CD8-positive, alpha-beta memory T cell (primary cell): ENCODE measurements at regions of chr1 and their contacts with region 1.

Region 1: DNA sequence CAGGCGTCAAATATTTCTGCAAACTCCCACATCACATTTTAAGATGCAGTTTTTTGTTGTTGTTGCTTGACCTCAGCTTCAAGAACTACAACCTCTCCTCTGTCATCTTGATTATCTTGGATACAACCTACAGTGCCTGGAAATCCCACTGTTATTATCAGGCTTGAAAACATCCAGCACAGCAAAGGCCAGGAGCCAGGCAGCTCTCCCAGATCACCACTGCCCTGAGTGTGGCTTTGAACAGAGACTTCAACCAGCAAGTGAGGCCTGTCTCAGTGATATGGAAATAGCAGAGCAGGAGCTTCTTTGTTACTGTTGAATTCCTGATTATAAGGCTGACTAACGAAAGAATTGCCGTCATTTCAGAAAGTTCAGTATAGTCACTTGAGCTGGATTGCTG is 28.5 kb downstream of the CCDC190 start:
- DNase-seq: no peak
- H3K4me3 ChIP-seq: no peak overlapping the region
- H3K4me3 Mint-ChIP-seq: no peak overlapping the region
- H3K27ac ChIP-seq: no peak overlapping the region
- H3K27ac Mint-ChIP-seq: no peak overlapping the region
- H3K4me1 ChIP-seq: no peaks in the 10 kb centered on the region
- H3K4me1 Mint-ChIP-seq: peaks cover 4 to 25% (median 7%) of the 10 kb centered on the region in 3 donors
- H3K27me3 ChIP-seq: no peaks in the 10 kb centered on the region
- H3K27me3 Mint-ChIP-seq: peaks cover 8 to 17% of the 10 kb centered on the region in 2 donors

Region 2: GRCh38 chr1:162868972-162869371 is 36.5 kb after region 1 on chr1:
- CTCF ChIA-PET with region 1: no interaction called
- POLR2A ChIA-PET with region 1: interaction called, 12 read pairs
- DNase-seq: no peak
- H3K4me3 ChIP-seq: no peak overlapping the region
- H3K4me3 Mint-ChIP-seq: peak overlapping the region in 1 of 7 donors; percentile 13
- H3K27ac ChIP-seq: no peak overlapping the region
- H3K27ac Mint-ChIP-seq: no peak overlapping the region
- H3K4me1 ChIP-seq: no peaks in the 10 kb centered on the region
- H3K4me1 Mint-ChIP-seq: no peaks in the 10 kb centered on the region
- H3K27me3 ChIP-seq: no peaks in the 10 kb centered on the region
- H3K27me3 Mint-ChIP-seq: peaks cover 9 to 39% of the 10 kb centered on the region in 2 donors